ENCODE measurements at regions of chr2 and their contacts with region 1.

Region 1: DNA sequence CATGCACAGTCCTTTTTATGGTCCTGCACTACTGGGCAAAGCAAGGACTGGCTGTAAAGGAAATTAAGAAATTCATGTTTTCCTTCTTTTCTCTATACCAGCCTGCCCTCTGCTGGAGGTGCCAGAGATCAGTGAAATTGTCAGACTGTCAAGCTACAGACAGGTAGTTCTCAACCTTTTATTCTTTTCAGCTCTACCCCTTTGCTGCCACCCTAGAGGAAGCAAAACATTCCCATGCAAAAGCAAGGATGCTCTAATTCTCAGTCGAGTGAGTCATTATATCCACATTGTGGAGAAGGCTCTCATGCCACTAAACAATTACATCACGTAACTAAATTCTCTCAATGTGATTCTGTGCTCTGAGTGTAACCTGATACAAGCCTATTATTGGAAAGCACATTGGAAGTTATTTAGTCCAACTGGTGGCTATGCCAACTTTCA is 25.0 kb upstream of the RAPGEF4 start:
- DNase-seq: no peak
- ATAC-seq: peak; percentile 78

Region 2: DNA sequence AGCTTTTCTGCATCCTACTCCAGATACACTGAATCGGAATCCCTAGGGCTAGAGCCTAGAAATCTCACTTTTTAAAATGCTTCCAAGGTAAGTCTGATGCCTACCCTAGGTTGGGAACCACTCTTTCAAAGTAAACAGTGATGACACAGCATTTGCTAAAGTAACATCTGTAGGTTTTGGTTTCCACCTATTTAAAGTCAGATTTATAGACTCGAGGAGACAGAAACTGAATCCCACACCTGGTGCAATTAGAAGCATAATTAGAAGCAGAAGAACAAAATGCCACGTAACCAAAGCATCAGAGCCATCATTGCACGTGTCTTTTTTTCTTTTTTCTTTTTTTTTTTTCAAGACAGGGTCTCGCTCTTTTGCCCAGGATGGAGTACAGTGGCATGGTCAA is 113.8 kb before region 1 on chr2:
- intact Hi-C with region 1: loop called (anchors 10 kb)
- DNase-seq: no peak
- ATAC-seq: no peak